Stomach (tissue), 19 donors: ENCODE measurements at regions of chr9 and their contacts with region 1.

Region 1: GRCh38 chr9:21317956-21318923 is 13.1 kb upstream of the IFNA5 start:
- DNase-seq: peak; percentile 45 to 74
- H3K4me3 ChIP-seq: no peak overlapping the region
- H3K27ac ChIP-seq: no peak overlapping the region
- H3K4me1 ChIP-seq: peaks cover 0 to 15% (median 5%) of the 10 kb centered on the region in 4 donors
- H3K27me3 ChIP-seq: no peaks in the 10 kb centered on the region
- CTCF ChIP-seq: peak in 5 of 7 experiments; percentile 6 to 66 (median 52)
- EP300 ChIP-seq: no peak
- POLR2A ChIP-seq: no peak

Region 2: GRCh38 chr9:21789541-21790037 is 471.3 kb after region 1 on chr9:
- intact Hi-C with region 1: loop called (anchors 10 kb)
- DNase-seq: peak; percentile 65 to 95
- H3K4me3 ChIP-seq: peak overlapping the region in 3 of 4 donors; percentile 20 to 27 (median 24)
- H3K27ac ChIP-seq: no peak overlapping the region
- H3K4me1 ChIP-seq: peaks cover 0 to 11% (median 2%) of the 10 kb centered on the region in 4 donors
- H3K27me3 ChIP-seq: peaks cover 0 to 29% (median 0%) of the 10 kb centered on the region in 3 donors
- CTCF ChIP-seq: peak in 5 of 7 experiments; percentile 54 to 93 (median 80)
- EP300 ChIP-seq: no peak
- POLR2A ChIP-seq: no peak